PC-9 (cell line): ENCODE measurements at regions of chr9 and their contacts with region 1.

Region 1: GRCh38 chr9:88161144-88161543 is 22.9 kb upstream of the SPATA31C2 start:
- DNase-seq: no peak
- H3K4me3 ChIP-seq: no peak overlapping the region
- H3K27ac ChIP-seq: no peak overlapping the region
- H3K4me1 ChIP-seq: no peaks in the 10 kb centered on the region
- H3K27me3 ChIP-seq: no peaks in the 10 kb centered on the region
- CTCF ChIP-seq: no peak

Region 2: DNA sequence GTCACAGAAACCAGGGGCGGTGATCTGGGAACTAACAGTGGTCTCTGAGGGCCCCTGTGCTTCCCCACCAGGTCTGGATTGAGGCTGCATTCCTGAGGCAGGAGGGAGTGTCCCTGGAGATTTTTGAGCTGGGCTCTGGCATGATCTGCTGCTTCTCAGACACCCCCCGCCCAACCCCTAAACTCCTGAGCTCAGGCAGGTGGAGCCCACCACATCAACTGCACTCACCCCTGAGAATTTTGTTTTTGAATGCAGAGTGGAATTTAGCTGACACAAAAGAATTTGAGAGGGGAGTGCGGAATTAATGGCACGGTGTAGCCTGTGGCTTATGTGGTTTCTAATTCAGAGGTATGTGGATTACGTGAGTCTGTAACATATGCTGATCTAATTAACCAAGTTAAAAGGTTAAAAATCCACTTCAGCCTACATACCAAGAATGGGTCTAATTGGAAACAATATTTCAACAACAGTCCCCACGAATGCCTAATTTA is 459.2 kb before region 1 on chr9:
- CTCF ChIA-PET with region 1: no interaction called
- POLR2A ChIA-PET with region 1: no interaction called
- intact Hi-C with region 1: no loop called
- DNase-seq: no peak
- H3K4me3 ChIP-seq: no peak overlapping the region
- H3K27ac ChIP-seq: peak overlapping the region; percentile 18; the same call in 1 of the 2 replicates
- H3K4me1 ChIP-seq: peaks cover 34% of the 10 kb centered on the region
- H3K27me3 ChIP-seq: no peaks in the 10 kb centered on the region
- CTCF ChIP-seq: no peak

Region 3: GRCh38 chr9:88218731-88219130 is 57.6 kb after region 1 on chr9:
- CTCF ChIA-PET with region 1: no interaction called
- POLR2A ChIA-PET with region 1: no interaction called
- intact Hi-C with region 1: no loop called
- DNase-seq: no peak
- H3K4me3 ChIP-seq: no peak overlapping the region
- H3K27ac ChIP-seq: no peak overlapping the region
- H3K4me1 ChIP-seq: no peaks in the 10 kb centered on the region
- H3K27me3 ChIP-seq: no peaks in the 10 kb centered on the region
- CTCF ChIP-seq: no peak

Region 4: GRCh38 chr9:88280816-88281382 is 119.8 kb after region 1 on chr9:
- CTCF ChIA-PET with region 1: no interaction called
- POLR2A ChIA-PET with region 1: interaction called, 13 read pairs
- intact Hi-C with region 1: no loop called
- DNase-seq: peak; percentile 77 to 83
- H3K4me3 ChIP-seq: peak overlapping the region; percentile 14; the same call in 1 of the 2 replicates
- H3K27ac ChIP-seq: peak overlapping the region; percentile 60
- H3K4me1 ChIP-seq: peaks cover 30% of the 10 kb centered on the region
- H3K27me3 ChIP-seq: no peaks in the 10 kb centered on the region
- CTCF ChIP-seq: 0 out of 2 replicates have a peak, but pooled peaks have one; percentile 26